CD4-positive, alpha-beta memory T cell (primary cell): ENCODE measurements at regions of chr6 and their contacts with region 1.

Region 1: GRCh38 chr6:34459899-34460593 is 5.8 kb upstream of the PACSIN1 start:
- DNase-seq: peak; percentile 48 to 56 (median 52)
- H3K4me3 ChIP-seq: no peak overlapping the region
- H3K4me3 Mint-ChIP-seq: no peak overlapping the region
- H3K27ac ChIP-seq: no peak overlapping the region
- H3K27ac Mint-ChIP-seq: no peak overlapping the region
- H3K4me1 ChIP-seq: no peaks in the 10 kb centered on the region
- H3K4me1 Mint-ChIP-seq: peaks cover 0 to under 1% (median under 1%) of the 10 kb centered on the region in 4 donors
- H3K27me3 ChIP-seq: peaks cover under 1% of the 10 kb centered on the region
- H3K27me3 Mint-ChIP-seq: peaks cover 8% of the 10 kb centered on the region in 2 donors

Region 2: DNA sequence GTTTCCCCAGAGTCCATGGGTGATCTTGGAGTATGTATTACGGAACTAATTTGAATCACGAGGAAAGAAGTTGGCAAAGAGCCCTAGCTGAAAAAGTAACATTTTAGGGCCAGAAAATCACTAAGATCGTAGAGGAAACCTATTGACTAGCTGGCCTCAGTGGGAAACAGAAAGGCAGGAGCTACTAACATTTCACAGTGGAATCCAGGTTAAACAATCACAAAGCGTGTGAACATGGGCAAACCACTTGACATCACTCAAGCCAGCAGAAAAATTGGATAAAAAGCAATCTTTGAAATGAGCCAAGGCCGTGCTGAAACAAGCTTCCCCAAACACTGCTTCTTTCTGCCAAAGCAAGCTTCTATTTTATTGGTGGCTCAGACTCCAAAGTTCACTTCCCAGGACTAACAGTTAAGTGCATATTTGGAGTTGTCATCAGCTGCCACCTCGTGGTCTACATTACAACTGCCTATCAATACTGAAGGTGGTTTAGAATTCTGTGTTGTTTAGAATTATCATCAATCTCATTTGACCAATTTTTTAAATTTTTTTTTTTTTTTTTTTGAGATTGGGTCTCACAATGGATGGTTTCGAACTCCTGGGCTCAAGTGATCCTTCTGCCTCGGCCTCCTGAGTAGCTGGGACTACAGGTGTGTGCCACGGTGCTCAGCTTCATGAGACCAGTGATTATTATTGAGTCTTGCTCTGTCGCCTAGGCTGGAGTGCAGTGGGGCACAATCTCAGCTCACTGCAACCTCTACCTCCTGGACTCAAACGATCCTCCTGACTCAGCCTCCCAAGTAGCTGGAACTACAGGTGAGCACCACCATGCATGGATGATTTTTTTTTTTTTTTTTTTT is 44.8 kb before region 1 on chr6:
- CTCF ChIA-PET with region 1: interaction called, 11 read pairs
- POLR2A ChIA-PET with region 1: no interaction called
- intact Hi-C with region 1: no loop called
- DNase-seq: peak; percentile 50 to 68 (median 51)
- H3K4me3 ChIP-seq: no peak overlapping the region
- H3K4me3 Mint-ChIP-seq: no peak overlapping the region
- H3K27ac ChIP-seq: no peak overlapping the region
- H3K27ac Mint-ChIP-seq: peak overlapping the region in 4 of 7 donors; percentile 2 to 86 (median 16)
- H3K4me1 ChIP-seq: no peaks in the 10 kb centered on the region
- H3K4me1 Mint-ChIP-seq: peaks cover 3 to 19% (median 5%) of the 10 kb centered on the region in 4 donors
- H3K27me3 ChIP-seq: no peaks in the 10 kb centered on the region
- H3K27me3 Mint-ChIP-seq: no peaks in the 10 kb centered on the region

Region 3: GRCh38 chr6:34583461-34583860 is 123.4 kb after region 1 on chr6:
- CTCF ChIA-PET with region 1: interaction called, 8 read pairs
- POLR2A ChIA-PET with region 1: no interaction called
- intact Hi-C with region 1: loop called (anchors 1 kb)
- DNase-seq: no peak
- H3K4me3 ChIP-seq: no peak overlapping the region
- H3K4me3 Mint-ChIP-seq: no peak overlapping the region
- H3K27ac ChIP-seq: no peak overlapping the region
- H3K27ac Mint-ChIP-seq: peak overlapping the region in 1 of 7 donors; percentile 70
- H3K4me1 ChIP-seq: no peaks in the 10 kb centered on the region
- H3K4me1 Mint-ChIP-seq: peaks cover 0 to 7% (median under 1%) of the 10 kb centered on the region in 4 donors
- H3K27me3 ChIP-seq: no peaks in the 10 kb centered on the region
- H3K27me3 Mint-ChIP-seq: no peaks in the 10 kb centered on the region

Region 4: GRCh38 chr6:34610819-34611477 is 150.9 kb after region 1 on chr6:
- CTCF ChIA-PET with region 1: interaction called, 178 read pairs
- POLR2A ChIA-PET with region 1: interaction called, 11 read pairs
- intact Hi-C with region 1: loop called (anchors 1 kb)
- DNase-seq: no peak
- H3K4me3 ChIP-seq: no peak overlapping the region
- H3K4me3 Mint-ChIP-seq: no peak overlapping the region
- H3K27ac ChIP-seq: no peak overlapping the region
- H3K27ac Mint-ChIP-seq: peak overlapping the region in 5 of 7 donors; percentile 48 to 74 (median 63)
- H3K4me1 ChIP-seq: peaks cover 8% of the 10 kb centered on the region
- H3K4me1 Mint-ChIP-seq: peaks cover 10 to 23% (median 15%) of the 10 kb centered on the region in 4 donors
- H3K27me3 ChIP-seq: no peaks in the 10 kb centered on the region
- H3K27me3 Mint-ChIP-seq: no peaks in the 10 kb centered on the region

Region 5: GRCh38 chr6:34986845-34987246 is 526.8 kb after region 1 on chr6:
- CTCF ChIA-PET with region 1: no interaction called
- POLR2A ChIA-PET with region 1: no interaction called
- intact Hi-C with region 1: loop called (anchors 5 kb)
- DNase-seq: peak; percentile 45 to 60 (median 52)
- H3K4me3 ChIP-seq: no peak overlapping the region
- H3K4me3 Mint-ChIP-seq: no peak overlapping the region
- H3K27ac ChIP-seq: no peak overlapping the region
- H3K27ac Mint-ChIP-seq: no peak overlapping the region
- H3K4me1 ChIP-seq: no peaks in the 10 kb centered on the region
- H3K4me1 Mint-ChIP-seq: no peaks in the 10 kb centered on the region
- H3K27me3 ChIP-seq: no peaks in the 10 kb centered on the region
- H3K27me3 Mint-ChIP-seq: no peaks in the 10 kb centered on the region

Region 6: GRCh38 chr6:35202066-35202546 is 742.1 kb after region 1 on chr6:
- CTCF ChIA-PET with region 1: interaction called, 3 read pairs
- POLR2A ChIA-PET with region 1: no interaction called
- intact Hi-C with region 1: loop called (anchors 1 kb)
- DNase-seq: no peak
- H3K4me3 ChIP-seq: no peak overlapping the region
- H3K4me3 Mint-ChIP-seq: no peak overlapping the region
- H3K27ac ChIP-seq: no peak overlapping the region
- H3K27ac Mint-ChIP-seq: no peak overlapping the region
- H3K4me1 ChIP-seq: no peaks in the 10 kb centered on the region
- H3K4me1 Mint-ChIP-seq: peaks cover 0 to 2% (median 0%) of the 10 kb centered on the region in 4 donors
- H3K27me3 ChIP-seq: peaks cover 19% of the 10 kb centered on the region
- H3K27me3 Mint-ChIP-seq: peaks cover 32 to 54% of the 10 kb centered on the region in 2 donors